CD4-positive, alpha-beta T cell (primary cell): ENCODE measurements at regions of chr20 and their contacts with region 1.

Region 1: DNA sequence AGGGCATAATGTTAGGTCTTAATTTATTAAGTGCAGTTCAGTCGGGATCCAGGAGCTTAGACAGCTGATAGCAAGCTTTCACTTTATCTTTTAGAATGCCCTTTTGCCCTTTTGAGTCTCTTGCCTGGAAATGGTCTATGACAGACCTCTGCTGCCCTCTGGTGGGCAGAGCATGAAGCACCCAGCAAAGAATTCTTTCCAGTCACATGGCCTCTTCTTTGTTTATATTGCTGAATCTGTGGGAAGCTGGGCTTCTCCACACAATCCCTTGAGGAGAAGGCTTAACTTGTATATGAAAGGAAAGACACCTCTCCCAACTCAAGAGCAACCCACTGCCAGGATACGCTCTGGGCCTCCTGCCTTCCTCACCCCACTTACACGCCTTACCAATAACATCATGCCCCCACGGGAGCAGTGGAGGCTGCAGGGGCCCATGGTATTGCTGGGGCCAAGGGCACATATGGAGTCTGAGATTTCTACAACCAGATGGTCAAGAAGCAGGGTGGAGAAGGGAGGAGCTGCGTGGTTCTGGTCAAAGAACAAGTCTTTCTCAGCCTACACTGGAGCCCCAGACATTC is 20.4 kb downstream of the WFDC3 start:
- DNase-seq: peak; percentile 58 to 88 (median 74)
- ATAC-seq: peak; percentile 92
- H3K4me3 ChIP-seq: no peak overlapping the region
- H3K4me3 Mint-ChIP-seq: no peak overlapping the region
- H3K27ac ChIP-seq: no peak overlapping the region
- H3K27ac Mint-ChIP-seq: no peak overlapping the region
- H3K4me1 ChIP-seq: peaks cover 5% of the 10 kb centered on the region
- H3K4me1 Mint-ChIP-seq: peaks cover 5% of the 10 kb centered on the region
- H3K27me3 ChIP-seq: peaks cover 8 to 12% of the 10 kb centered on the region in 2 experiments
- H3K27me3 Mint-ChIP-seq: peaks cover 18% of the 10 kb centered on the region
- CTCF ChIP-seq: peak; percentile 91

Region 2: GRCh38 chr20:45095753-45096371 is 675.4 kb before region 1 on chr20:
- CTCF ChIA-PET with region 1: interaction called, 5 read pairs
- POLR2A ChIA-PET with region 1: no interaction called
- intact Hi-C with region 1: loop called in 1 of 2 experiments (anchors 5 kb)
- DNase-seq: peak; percentile 31 to 81 (median 46)
- ATAC-seq: peak; percentile 58
- H3K4me3 ChIP-seq: no peak overlapping the region
- H3K4me3 Mint-ChIP-seq: peak overlapping the region; percentile 15
- H3K27ac ChIP-seq: no peak overlapping the region
- H3K27ac Mint-ChIP-seq: no peak overlapping the region
- H3K4me1 ChIP-seq: peaks cover 13% of the 10 kb centered on the region
- H3K4me1 Mint-ChIP-seq: peaks cover 16% of the 10 kb centered on the region
- H3K27me3 ChIP-seq: peaks cover 25 to 43% of the 10 kb centered on the region in 2 experiments
- H3K27me3 Mint-ChIP-seq: peaks cover 44% of the 10 kb centered on the region
- CTCF ChIP-seq: peak; percentile 72

Region 3: GRCh38 chr20:45320948-45321595 is 450.2 kb before region 1 on chr20:
- CTCF ChIA-PET with region 1: interaction called, 20 read pairs
- POLR2A ChIA-PET with region 1: interaction called, 3 read pairs
- intact Hi-C with region 1: loop called (anchors 1 kb)
- DNase-seq: peak in 4 of 14 experiments; percentile 10 to 63 (median 56)
- ATAC-seq: peak; percentile 73
- H3K4me3 ChIP-seq: no peak overlapping the region
- H3K4me3 Mint-ChIP-seq: no peak overlapping the region
- H3K27ac ChIP-seq: no peak overlapping the region
- H3K27ac Mint-ChIP-seq: peak overlapping the region; percentile 17
- H3K4me1 ChIP-seq: peaks cover 31% of the 10 kb centered on the region
- H3K4me1 Mint-ChIP-seq: peaks cover 21% of the 10 kb centered on the region
- H3K27me3 ChIP-seq: peaks cover 0 to 3% of the 10 kb centered on the region in 2 experiments
- H3K27me3 Mint-ChIP-seq: peaks cover 10% of the 10 kb centered on the region
- CTCF ChIP-seq: no peak

Region 4: GRCh38 chr20:45436732-45437391 is 334.4 kb before region 1 on chr20:
- CTCF ChIA-PET with region 1: interaction called, 13 read pairs
- POLR2A ChIA-PET with region 1: interaction called, 3 read pairs
- intact Hi-C with region 1: loop called in 1 of 2 experiments (anchors 5 kb)
- DNase-seq: peak; percentile 77 to 93 (median 84)
- ATAC-seq: peak; percentile 99
- H3K4me3 ChIP-seq: peak overlapping the region; percentile 54
- H3K4me3 Mint-ChIP-seq: peak overlapping the region; percentile 86
- H3K27ac ChIP-seq: no peak overlapping the region
- H3K27ac Mint-ChIP-seq: no peak overlapping the region
- H3K4me1 ChIP-seq: peaks cover 9% of the 10 kb centered on the region
- H3K4me1 Mint-ChIP-seq: peaks cover 7% of the 10 kb centered on the region
- H3K27me3 ChIP-seq: no peaks in the 10 kb centered on the region
- H3K27me3 Mint-ChIP-seq: no peaks in the 10 kb centered on the region
- CTCF ChIP-seq: peak; percentile 97

Region 5: GRCh38 chr20:45592574-45593189 is 178.6 kb before region 1 on chr20:
- CTCF ChIA-PET with region 1: no interaction called
- POLR2A ChIA-PET with region 1: no interaction called
- intact Hi-C with region 1: loop called in 1 of 2 experiments (anchors 2 kb)
- DNase-seq: peak in 3 of 14 experiments; percentile 39 to 48 (median 48)
- ATAC-seq: peak; percentile 43
- H3K4me3 ChIP-seq: no peak overlapping the region
- H3K4me3 Mint-ChIP-seq: no peak overlapping the region
- H3K27ac ChIP-seq: no peak overlapping the region
- H3K27ac Mint-ChIP-seq: no peak overlapping the region
- H3K4me1 ChIP-seq: no peaks in the 10 kb centered on the region
- H3K4me1 Mint-ChIP-seq: no peaks in the 10 kb centered on the region
- H3K27me3 ChIP-seq: peaks cover 6 to 18% of the 10 kb centered on the region in 2 experiments
- H3K27me3 Mint-ChIP-seq: peaks cover 58% of the 10 kb centered on the region
- CTCF ChIP-seq: peak; percentile 48

Region 6: DNA sequence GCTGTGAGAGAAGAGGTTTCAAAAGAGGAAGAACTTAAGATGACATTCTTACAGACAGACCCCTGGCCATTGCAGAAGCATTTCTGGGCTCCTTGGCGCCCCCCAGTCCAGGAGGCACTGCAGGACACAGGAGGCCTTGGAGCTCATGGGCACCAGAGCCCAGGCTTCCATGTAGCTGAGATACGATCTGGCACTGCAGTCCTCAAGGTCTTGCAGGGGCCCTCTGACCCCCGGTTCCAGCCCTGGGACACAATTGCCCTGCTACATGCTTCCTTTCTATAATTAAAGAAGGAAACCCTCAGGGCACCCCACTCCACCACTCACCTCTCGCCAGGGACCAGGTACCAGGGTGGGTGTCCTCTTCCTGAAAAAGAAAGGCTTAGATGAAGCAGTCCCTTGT is 13.2 kb before region 1 on chr20:
- CTCF ChIA-PET with region 1: no interaction called
- POLR2A ChIA-PET with region 1: no interaction called
- intact Hi-C with region 1: no loop called
- DNase-seq: no peak
- ATAC-seq: no peak
- H3K4me3 ChIP-seq: no peak overlapping the region
- H3K4me3 Mint-ChIP-seq: no peak overlapping the region
- H3K27ac ChIP-seq: no peak overlapping the region
- H3K27ac Mint-ChIP-seq: no peak overlapping the region
- H3K4me1 ChIP-seq: no peaks in the 10 kb centered on the region
- H3K4me1 Mint-ChIP-seq: no peaks in the 10 kb centered on the region
- H3K27me3 ChIP-seq: no peaks in the 10 kb centered on the region
- H3K27me3 Mint-ChIP-seq: peaks cover 8% of the 10 kb centered on the region
- CTCF ChIP-seq: no peak